Activated CD4-positive, alpha-beta T cell treated with anti-CD3 and anti-CD28 coated beads, Interleukin-2, amount 10 ng/mL, durations not matched to agents 24 days and 14 days (primary cell): ENCODE measurements at regions of chr4 and their contacts with region 1.

Region 1: GRCh38 chr4:142396279-142396678 is 449.8 kb downstream of the INPP4B start:
- DNase-seq: no peak
- H3K4me3 Mint-ChIP-seq: peak overlapping the region; percentile 65
- H3K27ac Mint-ChIP-seq: peak overlapping the region; percentile 88
- H3K4me1 Mint-ChIP-seq: peaks cover 51% of the 10 kb centered on the region
- H3K27me3 Mint-ChIP-seq: no peaks in the 10 kb centered on the region

Region 2: DNA sequence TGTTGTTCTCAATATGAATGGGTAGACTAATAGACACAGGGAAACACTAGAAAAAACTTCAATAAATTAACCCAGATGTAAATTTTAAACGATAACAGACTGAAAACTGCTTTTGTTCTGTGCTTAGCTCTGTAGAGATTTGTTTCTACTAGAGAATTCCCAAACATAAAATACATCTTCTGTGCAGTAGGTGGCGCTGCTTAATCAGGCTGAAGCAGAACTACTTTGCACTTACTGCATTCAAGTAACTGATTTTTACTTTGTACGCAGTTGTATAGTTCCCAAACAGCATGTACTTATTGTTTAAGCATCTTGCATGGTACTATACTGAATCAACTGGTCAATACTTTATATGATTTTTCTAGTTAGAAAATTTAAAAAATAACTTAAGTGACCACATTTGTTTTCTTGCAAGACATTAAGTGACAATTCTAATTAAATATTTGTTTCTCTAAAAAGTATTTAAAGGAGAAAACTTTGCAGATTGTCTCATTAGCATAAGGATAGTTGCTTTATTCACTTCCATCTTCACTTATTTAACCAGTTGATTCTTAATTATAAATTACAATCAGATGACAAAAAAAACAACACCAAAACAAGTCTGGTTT is 269.3 kb before region 1 on chr4:
- intact Hi-C with region 1: loop called (anchors 2 kb)
- DNase-seq: peak; percentile 88
- H3K4me3 Mint-ChIP-seq: no peak overlapping the region
- H3K27ac Mint-ChIP-seq: no peak overlapping the region
- H3K4me1 Mint-ChIP-seq: peaks cover 12% of the 10 kb centered on the region
- H3K27me3 Mint-ChIP-seq: no peaks in the 10 kb centered on the region

Region 3: DNA sequence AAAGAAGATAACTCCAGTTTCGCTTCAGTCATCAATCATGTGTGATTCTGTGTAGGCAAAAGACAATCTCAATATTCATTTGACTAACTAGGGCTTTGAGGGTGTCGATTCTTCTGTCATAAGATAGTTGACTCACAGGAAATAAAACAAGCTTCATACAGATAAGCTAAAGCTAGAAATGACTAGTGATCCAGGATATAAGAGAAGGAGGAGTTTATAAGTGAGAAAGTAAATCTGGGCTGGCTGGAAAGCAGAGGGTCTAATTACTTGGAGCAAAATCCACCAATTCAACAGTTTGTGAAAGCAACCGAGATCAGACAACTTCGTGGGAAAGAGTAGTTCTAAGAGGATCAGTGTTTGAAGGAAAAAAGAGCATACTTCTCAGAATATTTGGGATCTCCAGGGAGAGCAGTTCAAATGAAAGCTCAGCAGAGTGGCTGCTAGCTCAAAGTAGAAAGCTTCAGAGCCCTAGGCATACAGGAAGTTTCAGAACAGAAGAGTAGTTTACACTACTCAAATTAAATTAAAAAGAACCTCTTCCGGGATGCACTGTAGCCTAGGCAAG is 20.5 kb after region 1 on chr4:
- intact Hi-C with region 1: loop called (anchors 1 kb)
- DNase-seq: peak; percentile 75
- H3K4me3 Mint-ChIP-seq: peak overlapping the region; percentile 62
- H3K27ac Mint-ChIP-seq: peak overlapping the region; percentile 95
- H3K4me1 Mint-ChIP-seq: peaks cover 36% of the 10 kb centered on the region
- H3K27me3 Mint-ChIP-seq: no peaks in the 10 kb centered on the region